ENCODE measurements at regions of chr1 and their contacts with region 1.

Region 1: DNA sequence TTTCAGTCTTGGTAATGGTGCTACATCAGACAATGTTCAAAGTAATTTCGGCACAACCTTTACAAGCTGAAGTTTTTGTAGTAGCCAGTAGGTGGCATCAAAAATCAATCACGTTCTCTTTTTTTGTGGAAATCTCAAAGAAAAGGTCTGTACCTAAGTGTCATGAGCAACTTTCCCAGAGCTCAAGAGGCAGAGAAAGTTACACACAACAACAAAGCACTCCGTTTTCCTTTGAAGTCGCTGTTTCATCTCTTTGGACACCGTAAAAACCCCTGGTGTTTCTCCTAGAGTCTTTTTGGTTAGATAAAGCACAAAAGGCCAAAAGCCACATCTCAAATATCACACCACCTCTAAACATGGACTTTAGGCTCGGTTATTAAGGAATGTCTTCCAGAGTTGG is 131.6 kb downstream of the LHX8 start:
- DNase-seq: peak; percentile 63
- H3K4me3 Mint-ChIP-seq: no peak overlapping the region
- H3K27ac Mint-ChIP-seq: no peak overlapping the region
- H3K4me1 Mint-ChIP-seq: no peaks in the 10 kb centered on the region
- H3K27me3 Mint-ChIP-seq: no peaks in the 10 kb centered on the region
- CTCF ChIP-seq: peak; percentile 66

Region 2: DNA sequence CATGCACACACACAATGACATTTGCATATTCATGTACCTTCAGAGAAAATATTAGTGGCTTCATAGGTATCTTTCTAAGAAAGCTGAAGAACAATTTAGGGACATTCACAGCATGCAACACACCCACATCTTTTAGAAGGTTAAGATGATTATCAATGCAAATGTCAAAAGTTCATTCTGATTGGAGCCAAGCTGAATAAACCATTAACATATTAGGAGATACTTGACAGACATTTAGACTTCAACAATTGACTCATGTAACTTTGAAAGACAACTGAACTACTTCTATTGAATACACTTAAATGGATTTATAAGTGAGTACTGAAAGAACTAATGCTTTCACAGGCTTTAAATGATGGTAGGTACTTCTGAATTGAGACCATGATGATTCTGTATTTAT is 20.6 kb before region 1 on chr1:
- CTCF ChIA-PET with region 1: interaction called, 13 read pairs
- POLR2A ChIA-PET with region 1: interaction called, 3 read pairs
- intact Hi-C with region 1: no loop called
- DNase-seq: no peak
- H3K4me3 Mint-ChIP-seq: no peak overlapping the region
- H3K27ac Mint-ChIP-seq: no peak overlapping the region
- H3K4me1 Mint-ChIP-seq: no peaks in the 10 kb centered on the region
- H3K27me3 Mint-ChIP-seq: no peaks in the 10 kb centered on the region
- CTCF ChIP-seq: no peak

Region 3: GRCh38 chr1:75293270-75293669 is 27.5 kb after region 1 on chr1:
- CTCF ChIA-PET with region 1: interaction called, 10 read pairs
- POLR2A ChIA-PET with region 1: no interaction called
- intact Hi-C with region 1: no loop called
- DNase-seq: no peak
- H3K4me3 Mint-ChIP-seq: no peak overlapping the region
- H3K27ac Mint-ChIP-seq: no peak overlapping the region
- H3K4me1 Mint-ChIP-seq: no peaks in the 10 kb centered on the region
- H3K27me3 Mint-ChIP-seq: no peaks in the 10 kb centered on the region
- CTCF ChIP-seq: no peak

Region 4: GRCh38 chr1:75632350-75632949 is 366.7 kb after region 1 on chr1:
- CTCF ChIA-PET with region 1: interaction called, 51 read pairs
- POLR2A ChIA-PET with region 1: interaction called, 3 read pairs
- intact Hi-C with region 1: loop called (anchors 1 kb)
- DNase-seq: peak; percentile 58
- H3K4me3 Mint-ChIP-seq: no peak overlapping the region
- H3K27ac Mint-ChIP-seq: no peak overlapping the region
- H3K4me1 Mint-ChIP-seq: no peaks in the 10 kb centered on the region
- H3K27me3 Mint-ChIP-seq: peaks cover 20% of the 10 kb centered on the region
- CTCF ChIP-seq: peak; percentile 78

Region 5: GRCh38 chr1:75785983-75786853 is 520.4 kb after region 1 on chr1 and contains the start of gene RABGGTB:
- CTCF ChIA-PET with region 1: interaction called, 3 read pairs
- POLR2A ChIA-PET with region 1: interaction called, 3 read pairs
- intact Hi-C with region 1: loop called (anchors 5 kb)
- DNase-seq: peak; percentile 94
- H3K4me3 Mint-ChIP-seq: peak within 1 kb of the TSS; percentile 98
- H3K27ac Mint-ChIP-seq: peak within 1 kb of the TSS; percentile 98
- H3K4me1 Mint-ChIP-seq: peaks cover 27% of the 10 kb centered on the region
- H3K27me3 Mint-ChIP-seq: no peaks in the 10 kb centered on the region
- CTCF ChIP-seq: no peak
- total RNA-seq, gene RABGGTB: 116 and 127 TPM in 2 replicates

Measured in MCF 10A (cell line).